CD14-positive monocyte (primary cell): ENCODE measurements at regions of chr3 and their contacts with region 1.

Region 1: GRCh38 chr3:119616056-119616455 is 18.4 kb downstream of the PLA1A start:
- DNase-seq: no peak
- H3K4me3 ChIP-seq: no peak overlapping the region
- H3K4me3 Mint-ChIP-seq: no peak overlapping the region
- H3K27ac ChIP-seq: no peak overlapping the region
- H3K27ac Mint-ChIP-seq: no peak overlapping the region
- H3K4me1 ChIP-seq: no peaks in the 10 kb centered on the region
- H3K4me1 Mint-ChIP-seq: no peaks in the 10 kb centered on the region
- H3K27me3 ChIP-seq: no peaks in the 10 kb centered on the region
- H3K27me3 Mint-ChIP-seq: peaks cover 0 to 2% (median 0%) of the 10 kb centered on the region in 3 donors
- CTCF ChIP-seq: no peak

Region 2: GRCh38 chr3:119653876-119654275 is 37.8 kb after region 1 on chr3:
- intact Hi-C with region 1: loop called in 1 of 2 experiments (anchors 2 kb)
- DNase-seq: no peak
- H3K4me3 ChIP-seq: no peak overlapping the region
- H3K4me3 Mint-ChIP-seq: no peak overlapping the region
- H3K27ac ChIP-seq: no peak overlapping the region
- H3K27ac Mint-ChIP-seq: peak overlapping the region in 2 of 7 donors; percentile 0 to 74
- H3K4me1 ChIP-seq: peaks cover 5 to 6% of the 10 kb centered on the region in 2 donors
- H3K4me1 Mint-ChIP-seq: peaks cover 18% of the 10 kb centered on the region
- H3K27me3 ChIP-seq: no peaks in the 10 kb centered on the region
- H3K27me3 Mint-ChIP-seq: peaks cover 0 to 3% (median 0%) of the 10 kb centered on the region in 3 donors
- CTCF ChIP-seq: no peak

Region 3: GRCh38 chr3:119702530-119703157 is 86.6 kb after region 1 on chr3 and contains the start of gene CFAP91:
- intact Hi-C with region 1: no loop called
- DNase-seq: peak; percentile 94 to 98 (median 97)
- H3K4me3 ChIP-seq: peak within 1 kb of the TSS; percentile 15 to 70 (median 35)
- H3K4me3 Mint-ChIP-seq: peak within 1 kb of the TSS; percentile 66 to 82
- H3K27ac ChIP-seq: peak within 1 kb of the TSS; percentile 38 to 70
- H3K27ac Mint-ChIP-seq: peak within 1 kb of the TSS in 6 of 7 donors; percentile 26 to 88 (median 84)
- H3K4me1 ChIP-seq: peaks cover 32 to 34% of the 10 kb centered on the region in 2 donors
- H3K4me1 Mint-ChIP-seq: peaks cover 28% of the 10 kb centered on the region
- H3K27me3 ChIP-seq: peaks cover 4 to 6% of the 10 kb centered on the region in 2 donors
- H3K27me3 Mint-ChIP-seq: peaks cover 2 to 18% (median 6%) of the 10 kb centered on the region in 3 donors
- CTCF ChIP-seq: no peak
- polyA plus RNA-seq, gene CFAP91: 0.14 TPM in 1 of 3 donors, not detected in the others

Region 4: DNA sequence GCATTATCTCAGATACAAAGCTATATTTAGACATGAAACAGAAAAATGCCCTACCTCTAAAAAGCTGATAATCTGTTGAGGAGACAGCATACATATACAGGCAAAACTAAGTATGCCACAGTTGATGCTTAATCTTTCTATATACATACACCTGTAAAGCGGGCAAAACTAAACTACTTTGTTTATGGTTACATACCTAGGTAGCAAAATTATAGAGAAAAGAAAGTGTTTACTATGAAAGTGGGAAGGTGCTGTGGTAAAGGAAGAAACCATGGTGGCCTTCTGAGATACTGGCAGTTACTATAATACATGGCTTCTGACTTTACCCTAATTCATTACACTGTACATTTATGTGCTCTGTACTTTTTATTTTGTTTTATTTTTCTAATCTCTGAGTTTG is 129.9 kb after region 1 on chr3:
- intact Hi-C with region 1: no loop called
- DNase-seq: no peak
- H3K4me3 ChIP-seq: no peak overlapping the region
- H3K4me3 Mint-ChIP-seq: no peak overlapping the region
- H3K27ac ChIP-seq: no peak overlapping the region
- H3K27ac Mint-ChIP-seq: no peak overlapping the region
- H3K4me1 ChIP-seq: peaks cover 9% of the 10 kb centered on the region in 2 donors
- H3K4me1 Mint-ChIP-seq: peaks cover 13% of the 10 kb centered on the region
- H3K27me3 ChIP-seq: no peaks in the 10 kb centered on the region
- H3K27me3 Mint-ChIP-seq: peaks cover 0 to 2% (median 0%) of the 10 kb centered on the region in 3 donors
- CTCF ChIP-seq: no peak